OCI-LY7 (cell line): ENCODE measurements at regions of chr13 and their contacts with region 1.

Region 1: DNA sequence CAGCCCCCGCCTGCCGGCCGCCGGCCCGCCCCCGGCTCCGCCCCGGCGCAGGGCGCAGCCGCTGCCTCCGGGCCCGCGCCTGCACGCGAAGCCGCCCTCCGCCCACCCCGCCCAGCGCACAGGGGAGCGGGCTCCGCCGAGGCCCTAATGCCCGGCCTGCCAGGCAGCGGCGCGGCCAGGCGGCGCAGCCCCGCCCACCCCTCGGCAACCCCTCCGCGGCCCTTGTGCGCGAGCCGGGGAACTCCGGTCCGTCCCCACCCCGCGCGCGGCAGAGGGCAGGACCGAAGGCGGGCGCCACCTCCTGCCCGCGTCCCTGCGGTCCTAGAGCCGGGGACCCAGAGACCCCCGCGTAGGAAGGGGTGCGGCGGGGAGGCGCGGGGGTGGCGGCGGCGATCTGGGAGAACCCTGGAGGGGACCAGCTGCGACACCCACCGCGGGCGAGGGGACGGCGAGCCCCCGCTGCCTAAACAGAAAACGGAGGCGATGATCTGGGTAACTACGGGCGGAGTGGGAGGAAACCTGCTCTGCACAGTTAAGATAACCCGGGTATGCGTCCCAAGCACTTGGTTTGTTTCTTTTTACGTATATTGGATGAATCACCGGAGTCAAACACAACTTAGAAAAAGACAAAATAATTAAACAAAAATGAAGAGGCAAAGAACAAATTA is 350 bp upstream of the USP12 start:
- DNase-seq: peak; percentile 93
- H3K4me3 ChIP-seq: peak overlapping the region; percentile 82
- H3K27ac ChIP-seq: peak overlapping the region; percentile 61
- H3K4me1 ChIP-seq: peaks cover 53% of the 10 kb centered on the region
- CTCF ChIP-seq: peak; percentile 32; the same call in 1 of the 2 replicates

Region 2: GRCh38 chr13:25286969-25287961 is 1884.7 kb before region 1 on chr13 and contains the start of gene MTMR6:
- CTCF ChIA-PET with region 1: no interaction called
- POLR2A ChIA-PET with region 1: no interaction called
- intact Hi-C with region 1: loop called (anchors 10 kb)
- DNase-seq: peak; percentile 97
- H3K4me3 ChIP-seq: peak within 1 kb of the TSS; percentile 97
- H3K27ac ChIP-seq: peak within 1 kb of the TSS; percentile 92
- H3K4me1 ChIP-seq: peaks cover 39% of the 10 kb centered on the region
- CTCF ChIP-seq: peak; percentile 93
- total RNA-seq, gene MTMR6: 6.2 and 6.4 TPM in 2 replicates

Region 3: DNA sequence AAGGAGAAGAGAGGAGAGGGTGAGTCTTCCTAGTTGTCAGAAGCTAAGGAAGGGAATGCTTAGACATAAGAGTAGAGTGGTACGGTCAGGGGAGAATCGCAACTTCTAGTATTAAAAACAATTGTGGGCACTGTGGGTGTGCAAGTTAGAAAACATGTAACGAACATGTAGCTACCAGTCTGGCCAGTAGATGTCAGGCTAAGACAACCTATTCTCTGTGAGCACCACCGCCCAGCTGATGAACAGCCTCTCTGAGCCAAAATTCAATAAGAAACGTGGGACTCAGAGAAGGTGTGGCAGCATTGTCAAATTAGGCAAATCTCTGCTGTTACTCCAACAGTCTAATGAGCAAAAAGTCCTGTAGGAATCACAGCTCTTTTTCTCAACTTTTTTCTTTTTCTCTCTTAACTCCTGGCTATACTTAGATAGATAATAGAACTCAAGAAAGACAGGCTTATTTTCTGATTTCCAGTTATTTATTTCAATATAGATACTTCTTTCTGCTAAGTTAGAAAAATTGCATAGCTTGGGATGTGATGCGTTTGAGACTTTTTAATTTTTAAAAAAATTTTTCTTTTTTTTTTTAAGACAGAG is 186.6 kb before region 1 on chr13:
- CTCF ChIA-PET with region 1: no interaction called
- POLR2A ChIA-PET with region 1: no interaction called
- intact Hi-C with region 1: no loop called
- DNase-seq: peak; percentile 82
- H3K4me3 ChIP-seq: no peak overlapping the region
- H3K27ac ChIP-seq: no peak overlapping the region
- H3K4me1 ChIP-seq: no peaks in the 10 kb centered on the region
- CTCF ChIP-seq: peak; percentile 94

Region 4: GRCh38 chr13:26996965-26997752 is 174.8 kb before region 1 on chr13:
- CTCF ChIA-PET with region 1: no interaction called
- POLR2A ChIA-PET with region 1: interaction called, 3 read pairs
- intact Hi-C with region 1: loop called (anchors 5 kb)
- DNase-seq: peak; percentile 75
- H3K4me3 ChIP-seq: peak overlapping the region; percentile 10
- H3K27ac ChIP-seq: no peak overlapping the region
- H3K4me1 ChIP-seq: peaks cover 15% of the 10 kb centered on the region
- CTCF ChIP-seq: no peak

Region 5: DNA sequence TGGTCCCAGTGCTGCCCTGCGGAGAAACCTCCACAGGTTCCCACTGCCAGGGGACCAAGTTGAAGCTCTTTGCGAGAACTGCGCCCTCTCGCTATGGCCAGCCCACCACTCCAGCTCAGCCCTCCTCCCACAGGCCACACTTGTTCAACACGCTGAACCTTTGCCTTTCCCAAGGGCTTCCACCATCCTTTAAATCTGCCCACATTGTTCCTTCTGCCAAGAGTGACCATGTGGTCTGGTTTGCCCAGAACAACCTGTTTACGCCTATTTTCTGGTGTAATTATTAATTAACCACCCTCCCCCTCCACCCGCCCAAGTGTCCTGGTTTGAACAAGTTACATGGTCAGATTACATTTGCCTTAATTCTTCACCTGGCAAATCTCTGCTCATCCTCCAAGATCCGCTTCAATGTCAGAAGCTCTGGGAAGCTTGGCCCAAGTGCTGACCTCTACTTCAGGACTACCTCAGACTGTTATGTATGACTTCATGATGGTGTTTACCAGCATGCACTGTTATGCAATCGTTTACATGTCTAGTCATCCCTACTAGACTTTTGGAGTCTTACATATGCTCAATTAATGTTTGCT is 11.7 kb after region 1 on chr13:
- CTCF ChIA-PET with region 1: no interaction called
- POLR2A ChIA-PET with region 1: no interaction called
- intact Hi-C with region 1: no loop called
- DNase-seq: no peak
- H3K4me3 ChIP-seq: no peak overlapping the region
- H3K27ac ChIP-seq: no peak overlapping the region
- H3K4me1 ChIP-seq: no peaks in the 10 kb centered on the region
- CTCF ChIP-seq: no peak

Region 6: DNA sequence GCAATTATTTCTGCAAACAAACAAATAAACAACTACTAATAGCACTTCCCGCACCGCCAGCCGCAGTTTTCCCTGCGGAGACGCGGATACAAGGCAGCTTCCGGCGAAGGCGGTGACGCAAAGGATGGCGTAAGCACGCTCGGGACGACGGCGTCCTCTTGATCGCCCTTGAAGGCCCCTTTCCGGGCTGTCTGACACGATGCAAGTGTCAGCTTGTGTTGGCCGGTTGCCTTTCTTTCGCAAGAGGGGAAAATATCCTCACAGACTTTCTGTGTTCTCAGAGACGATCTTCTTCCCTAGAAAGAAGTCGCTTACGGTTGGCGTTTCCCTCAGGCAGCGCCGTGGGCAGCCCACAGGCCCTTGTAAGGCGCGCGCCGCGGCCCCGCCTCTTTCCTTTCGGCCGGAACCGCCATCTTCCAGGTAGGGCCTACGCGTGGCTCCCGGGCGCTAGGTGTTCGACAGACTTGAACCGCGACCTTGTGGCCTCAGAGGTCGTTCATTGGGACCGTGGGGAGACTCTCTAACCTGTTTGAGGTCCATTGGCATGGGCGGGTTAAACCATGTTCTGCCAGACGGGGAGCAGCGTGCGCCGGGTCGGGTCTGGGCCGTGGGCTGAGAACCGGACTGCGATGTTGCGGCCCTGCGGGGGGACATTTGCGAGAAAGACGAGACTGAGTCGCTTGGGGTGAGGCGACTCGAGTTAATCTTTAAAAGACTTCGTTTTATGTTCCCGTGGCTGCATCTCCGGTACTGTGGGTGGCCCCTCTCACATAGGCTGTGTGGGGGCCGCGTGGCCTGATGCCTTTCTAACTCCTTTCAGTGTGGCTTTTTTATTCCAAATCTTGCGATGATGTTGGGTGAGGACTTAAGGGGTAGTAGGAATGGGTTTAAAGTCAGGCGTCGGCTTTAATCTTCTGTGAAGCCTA is 79.5 kb after region 1 on chr13 and contains the start of gene RPL21:
- CTCF ChIA-PET with region 1: no interaction called
- POLR2A ChIA-PET with region 1: no interaction called
- intact Hi-C with region 1: loop called (anchors 1 kb)
- DNase-seq: peak; percentile 97
- H3K4me3 ChIP-seq: peak within 1 kb of the TSS; percentile 99
- H3K27ac ChIP-seq: peak within 1 kb of the TSS; percentile 84
- H3K4me1 ChIP-seq: peaks cover 42% of the 10 kb centered on the region
- CTCF ChIP-seq: no peak
- total RNA-seq, gene RPL21: 1,266 and 1,706 TPM in 2 replicates

Region 7: DNA sequence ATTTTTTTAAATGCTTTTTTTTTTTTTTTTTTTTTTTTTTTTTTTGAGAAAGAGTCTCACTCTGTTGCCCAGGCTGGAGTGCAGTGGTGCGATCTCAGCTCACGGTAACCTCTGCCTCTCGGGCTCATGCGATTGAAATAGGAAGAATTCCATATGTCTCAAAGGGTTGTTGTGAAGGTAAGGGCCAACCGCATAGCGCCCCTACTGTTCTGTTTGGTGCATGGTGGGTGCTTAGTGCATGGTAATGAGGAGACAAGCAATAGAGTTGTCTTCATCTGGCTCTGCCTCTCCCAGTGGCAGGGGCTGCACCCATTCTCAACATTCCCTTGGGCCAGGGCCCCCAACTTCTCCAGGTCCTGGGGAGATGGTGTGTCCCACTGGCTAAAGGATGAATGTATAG is 167.3 kb after region 1 on chr13:
- CTCF ChIA-PET with region 1: no interaction called
- POLR2A ChIA-PET with region 1: interaction called, 3 read pairs
- intact Hi-C with region 1: loop called (anchors 2 kb)
- DNase-seq: peak; percentile 78
- H3K4me3 ChIP-seq: no peak overlapping the region
- H3K27ac ChIP-seq: no peak overlapping the region
- H3K4me1 ChIP-seq: peaks cover 4% of the 10 kb centered on the region
- CTCF ChIP-seq: peak; percentile 67